ENCODE measurements at regions of chr15 and their contacts with region 1.

Region 1: DNA sequence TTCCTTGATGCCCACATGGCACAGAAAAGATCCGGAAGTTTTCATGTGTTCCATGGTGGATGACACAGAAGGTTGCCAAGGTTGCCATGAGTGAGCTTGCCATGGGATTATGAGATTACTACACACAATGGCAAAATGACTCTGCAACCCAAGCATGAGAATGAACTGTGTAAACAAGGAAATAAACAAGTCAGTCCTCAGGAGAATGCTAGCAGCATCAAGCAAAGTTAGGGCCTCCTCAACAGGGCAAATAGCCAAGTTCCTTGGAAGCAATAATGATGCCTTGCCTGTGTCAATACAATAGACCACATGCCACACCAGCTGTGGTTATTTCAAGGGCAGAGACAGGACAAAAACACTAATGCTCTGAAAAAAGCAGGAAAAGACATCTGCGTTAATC is 41.8 kb downstream of the AQR start:
- DNase-seq: no peak
- ATAC-seq: no peak

Region 2: GRCh38 chr15:34621675-34622074 is 306.1 kb before region 1 on chr15:
- intact Hi-C with region 1: loop called (anchors 10 kb)
- DNase-seq: no peak
- ATAC-seq: no peak

Region 3: DNA sequence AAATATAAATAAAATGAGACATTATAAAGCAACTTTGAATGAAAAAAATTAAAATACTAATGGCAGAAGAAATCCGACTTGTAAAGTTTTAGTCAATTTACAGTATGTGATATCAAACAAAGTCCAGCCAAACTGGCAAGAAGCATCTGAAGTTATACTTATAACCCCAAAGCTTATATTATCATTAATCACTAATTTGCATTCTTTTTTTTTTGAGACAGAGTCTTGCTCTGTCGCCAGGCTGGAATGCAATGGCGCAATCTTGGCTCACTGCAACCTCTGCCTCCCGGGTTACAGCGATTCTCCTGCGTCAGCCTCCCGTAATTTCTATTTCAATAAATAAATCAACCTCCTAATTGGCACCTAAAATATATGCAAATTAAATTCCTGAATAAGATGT is 38.2 kb before region 1 on chr15:
- intact Hi-C with region 1: no loop called
- DNase-seq: no peak
- ATAC-seq: no peak